IMR-90 (cell line): ENCODE measurements at regions of chr19 and their contacts with region 1.

Region 1: DNA sequence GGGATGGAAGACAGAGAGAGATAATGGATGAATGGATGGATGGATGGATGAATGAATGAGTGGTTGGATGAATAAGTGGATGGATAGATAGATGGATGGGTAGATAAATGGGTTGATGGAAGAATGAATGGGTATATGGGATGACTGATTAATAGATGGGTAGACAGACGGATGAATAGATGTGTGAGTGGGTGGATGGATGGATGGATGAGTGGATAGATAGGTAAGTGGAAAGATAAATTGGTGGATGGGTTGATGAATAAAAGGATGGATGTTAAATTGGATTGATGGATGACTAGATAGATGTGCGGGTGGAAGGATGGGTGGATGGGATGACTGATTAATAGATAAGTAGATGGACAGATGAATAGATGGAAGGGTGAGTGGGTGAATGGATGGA is 1.4 kb downstream of the CASP14 start:
- DNase-seq: no peak
- ATAC-seq: no peak
- H3K4me3 ChIP-seq: no peak overlapping the region
- H3K27ac ChIP-seq: no peak overlapping the region
- H3K4me1 ChIP-seq: no peaks in the 10 kb centered on the region
- H3K27me3 ChIP-seq: no peaks in the 10 kb centered on the region
- CTCF ChIP-seq: no peak
- POLR2A ChIP-seq: no peak
- RAD21 ChIP-seq: no peak

Region 2: GRCh38 chr19:15038297-15038696 is 12.3 kb before region 1 on chr19:
- CTCF ChIA-PET with region 1: no interaction called
- POLR2A ChIA-PET with region 1: interaction called, 15 read pairs
- dilution Hi-C with region 1: no loop called
- in situ Hi-C with region 1: no loop called
- intact Hi-C with region 1: no loop called
- DNase-seq: no peak
- ATAC-seq: no peak
- H3K4me3 ChIP-seq: no peak overlapping the region
- H3K27ac ChIP-seq: no peak overlapping the region
- H3K4me1 ChIP-seq: no peaks in the 10 kb centered on the region
- H3K27me3 ChIP-seq: no peaks in the 10 kb centered on the region
- CTCF ChIP-seq: no peak
- POLR2A ChIP-seq: no peak
- RAD21 ChIP-seq: no peak

Region 3: GRCh38 chr19:15815306-15815705 is 764.7 kb after region 1 on chr19 and contains the start of gene OR10H1:
- CTCF ChIA-PET with region 1: no interaction called
- POLR2A ChIA-PET with region 1: no interaction called
- dilution Hi-C with region 1: no loop called
- in situ Hi-C with region 1: no loop called
- intact Hi-C with region 1: no loop called
- DNase-seq: no peak
- ATAC-seq: no peak
- H3K4me3 ChIP-seq: no peak within 1 kb of the TSS
- H3K27ac ChIP-seq: no peak within 1 kb of the TSS
- H3K4me1 ChIP-seq: no peaks in the 10 kb centered on the region
- H3K27me3 ChIP-seq: no peaks in the 10 kb centered on the region
- CTCF ChIP-seq: no peak
- POLR2A ChIP-seq: no peak
- RAD21 ChIP-seq: no peak
- total RNA-seq, gene OR10H1: not detected in 2 replicates